ENCODE measurements at regions of chr6 and their contacts with region 1.

Region 1: GRCh38 chr6:134882426-134883038 is 67.4 kb downstream of the ALDH8A1 start:
- DNase-seq: peak; percentile 45 to 65
- H3K4me3 ChIP-seq: no peak overlapping the region
- H3K4me3 Mint-ChIP-seq: no peak overlapping the region
- H3K27ac Mint-ChIP-seq: no peak overlapping the region
- H3K4me1 ChIP-seq: no peaks in the 10 kb centered on the region; the same call in 1 of the 2 replicates
- H3K4me1 Mint-ChIP-seq: no peaks in the 10 kb centered on the region
- H3K27me3 ChIP-seq: no peaks in the 10 kb centered on the region
- H3K27me3 Mint-ChIP-seq: no peaks in the 10 kb centered on the region
- CTCF ChIP-seq: peak; percentile 87 to 91

Region 2: GRCh38 chr6:134123666-134124208 is 758.8 kb before region 1 on chr6:
- CTCF ChIA-PET with region 1: interaction called, 6 read pairs
- POLR2A ChIA-PET with region 1: no interaction called
- intact Hi-C with region 1: loop called (anchors 1 kb)
- DNase-seq: peak; percentile 70 to 71
- H3K4me3 ChIP-seq: no peak overlapping the region
- H3K4me3 Mint-ChIP-seq: no peak overlapping the region
- H3K27ac Mint-ChIP-seq: no peak overlapping the region
- H3K4me1 ChIP-seq: no peaks in the 10 kb centered on the region
- H3K4me1 Mint-ChIP-seq: no peaks in the 10 kb centered on the region
- H3K27me3 ChIP-seq: no peaks in the 10 kb centered on the region
- H3K27me3 Mint-ChIP-seq: no peaks in the 10 kb centered on the region
- CTCF ChIP-seq: peak; percentile 54 to 58

Region 3: GRCh38 chr6:134161036-134161435 is 721.5 kb before region 1 on chr6:
- CTCF ChIA-PET with region 1: no interaction called
- POLR2A ChIA-PET with region 1: no interaction called
- intact Hi-C with region 1: loop called (anchors 1 kb)
- DNase-seq: no peak
- H3K4me3 ChIP-seq: no peak overlapping the region
- H3K4me3 Mint-ChIP-seq: peak overlapping the region; percentile 39
- H3K27ac Mint-ChIP-seq: peak overlapping the region; percentile 90
- H3K4me1 ChIP-seq: peaks cover 18% of the 10 kb centered on the region
- H3K4me1 Mint-ChIP-seq: peaks cover 20% of the 10 kb centered on the region
- H3K27me3 ChIP-seq: no peaks in the 10 kb centered on the region
- H3K27me3 Mint-ChIP-seq: no peaks in the 10 kb centered on the region
- CTCF ChIP-seq: no peak

Region 4: DNA sequence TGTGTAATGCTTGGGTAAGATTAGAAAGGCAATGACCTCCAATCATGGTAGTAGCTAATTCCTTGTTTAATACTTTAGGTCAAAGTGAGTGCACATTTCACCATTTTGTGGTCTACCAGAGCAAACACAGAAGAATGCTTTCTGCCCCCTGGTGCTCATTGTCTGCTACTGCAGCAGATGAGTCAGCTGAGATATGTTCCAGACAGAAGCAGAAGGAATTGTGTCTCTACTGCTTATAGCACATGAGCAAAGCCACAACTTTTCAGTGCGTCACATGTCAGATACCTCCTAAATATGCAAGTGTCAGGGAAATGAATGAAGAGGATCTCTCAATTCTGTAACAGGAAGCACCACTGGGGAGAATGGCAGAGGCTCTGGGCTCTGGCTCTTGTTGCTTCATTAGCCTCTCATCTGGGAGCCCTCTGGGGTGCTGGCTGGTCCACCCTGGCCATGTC is 241.5 kb before region 1 on chr6:
- CTCF ChIA-PET with region 1: no interaction called
- POLR2A ChIA-PET with region 1: no interaction called
- intact Hi-C with region 1: loop called (anchors 5 kb)
- DNase-seq: peak; percentile 71 to 78
- H3K4me3 ChIP-seq: no peak overlapping the region
- H3K4me3 Mint-ChIP-seq: no peak overlapping the region
- H3K27ac Mint-ChIP-seq: peak overlapping the region; percentile 56
- H3K4me1 ChIP-seq: peaks cover 37% of the 10 kb centered on the region
- H3K4me1 Mint-ChIP-seq: peaks cover 34% of the 10 kb centered on the region
- H3K27me3 ChIP-seq: no peaks in the 10 kb centered on the region
- H3K27me3 Mint-ChIP-seq: no peaks in the 10 kb centered on the region
- CTCF ChIP-seq: peak; percentile 76 to 82

Region 5: GRCh38 chr6:134657751-134658522 is 224.6 kb before region 1 on chr6:
- CTCF ChIA-PET with region 1: interaction called, 4 read pairs
- POLR2A ChIA-PET with region 1: no interaction called
- intact Hi-C with region 1: loop called (anchors 5 kb)
- DNase-seq: no peak
- H3K4me3 ChIP-seq: no peak overlapping the region
- H3K4me3 Mint-ChIP-seq: no peak overlapping the region
- H3K27ac Mint-ChIP-seq: no peak overlapping the region
- H3K4me1 ChIP-seq: peaks cover 29% of the 10 kb centered on the region
- H3K4me1 Mint-ChIP-seq: peaks cover 13% of the 10 kb centered on the region
- H3K27me3 ChIP-seq: no peaks in the 10 kb centered on the region
- H3K27me3 Mint-ChIP-seq: no peaks in the 10 kb centered on the region
- CTCF ChIP-seq: no peak

Measured in Caco-2 (cell line).